CD4-positive, alpha-beta memory T cell (primary cell): ENCODE measurements at regions of chr7 and their contacts with region 1.

Region 1: GRCh38 chr7:139340037-139340807 is 915 bp upstream of the FMC1 start:
- DNase-seq: peak; percentile 97 to 100 (median 98)
- H3K4me3 ChIP-seq: peak overlapping the region; percentile 95 to 96
- H3K4me3 Mint-ChIP-seq: peak overlapping the region; percentile 95 to 99 (median 98)
- H3K27ac ChIP-seq: peak overlapping the region; percentile 100
- H3K27ac Mint-ChIP-seq: peak overlapping the region; percentile 100
- H3K4me1 ChIP-seq: peaks cover 20% of the 10 kb centered on the region
- H3K4me1 Mint-ChIP-seq: peaks cover 17 to 45% (median 27%) of the 10 kb centered on the region in 4 donors
- H3K27me3 ChIP-seq: no peaks in the 10 kb centered on the region
- H3K27me3 Mint-ChIP-seq: peaks cover 3 to 6% of the 10 kb centered on the region in 2 donors

Region 2: DNA sequence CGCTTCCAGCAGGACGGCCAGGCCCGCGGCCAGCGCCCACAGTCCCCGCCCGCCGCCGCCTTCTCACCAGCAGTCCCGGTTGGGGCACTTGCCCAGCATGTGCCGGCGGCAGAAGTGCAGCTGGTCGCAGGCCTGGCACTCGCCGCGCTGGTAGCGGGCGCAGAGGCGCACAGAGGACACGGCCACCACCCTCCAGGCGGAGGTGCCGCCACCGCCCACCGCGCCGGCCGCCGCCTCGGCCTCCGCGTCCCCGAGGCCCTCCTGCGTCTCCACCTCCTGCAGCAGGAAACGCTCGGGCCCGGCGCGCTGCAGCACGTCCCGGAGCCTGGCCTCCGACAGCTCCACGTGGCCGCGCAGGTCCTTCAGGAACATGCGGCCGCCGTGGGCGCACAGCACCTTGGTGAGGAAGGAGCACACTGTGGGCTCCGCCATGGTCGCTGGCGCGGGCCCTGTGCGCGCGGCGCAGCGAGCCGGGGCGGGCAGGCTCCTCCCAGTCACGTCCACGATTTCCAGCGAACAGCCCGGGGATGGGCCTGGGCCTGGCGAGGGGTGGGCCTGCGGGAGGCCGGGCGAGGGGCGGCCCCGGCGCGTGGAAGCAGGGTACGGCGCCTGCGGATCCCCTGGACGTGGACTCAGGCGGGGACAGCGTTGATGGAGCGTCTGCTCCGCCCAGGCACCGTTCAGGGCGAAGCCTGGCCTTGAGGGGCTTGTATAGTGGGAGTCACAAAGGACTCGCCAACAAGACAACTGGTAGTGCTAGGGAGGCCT is 304.5 kb before region 1 on chr7 and contains the start of gene ZC3HAV1L:
- CTCF ChIA-PET with region 1: no interaction called
- POLR2A ChIA-PET with region 1: no interaction called
- intact Hi-C with region 1: loop called (anchors 5 kb)
- DNase-seq: peak in 4 of 5 donors; percentile 35 to 48 (median 39)
- H3K4me3 ChIP-seq: peak within 1 kb of the TSS; percentile 14 to 51
- H3K4me3 Mint-ChIP-seq: peak within 1 kb of the TSS; percentile 74 to 88 (median 84)
- H3K27ac ChIP-seq: no peak within 1 kb of the TSS
- H3K27ac Mint-ChIP-seq: peak within 1 kb of the TSS in 3 of 7 donors; percentile 32 to 79 (median 57)
- H3K4me1 ChIP-seq: peaks cover 22% of the 10 kb centered on the region
- H3K4me1 Mint-ChIP-seq: peaks cover 12 to 33% (median 16%) of the 10 kb centered on the region in 4 donors
- H3K27me3 ChIP-seq: no peaks in the 10 kb centered on the region
- H3K27me3 Mint-ChIP-seq: no peaks in the 10 kb centered on the region
- total RNA-seq, gene ZC3HAV1L: 3.8 to 4.6 TPM

Region 3: DNA sequence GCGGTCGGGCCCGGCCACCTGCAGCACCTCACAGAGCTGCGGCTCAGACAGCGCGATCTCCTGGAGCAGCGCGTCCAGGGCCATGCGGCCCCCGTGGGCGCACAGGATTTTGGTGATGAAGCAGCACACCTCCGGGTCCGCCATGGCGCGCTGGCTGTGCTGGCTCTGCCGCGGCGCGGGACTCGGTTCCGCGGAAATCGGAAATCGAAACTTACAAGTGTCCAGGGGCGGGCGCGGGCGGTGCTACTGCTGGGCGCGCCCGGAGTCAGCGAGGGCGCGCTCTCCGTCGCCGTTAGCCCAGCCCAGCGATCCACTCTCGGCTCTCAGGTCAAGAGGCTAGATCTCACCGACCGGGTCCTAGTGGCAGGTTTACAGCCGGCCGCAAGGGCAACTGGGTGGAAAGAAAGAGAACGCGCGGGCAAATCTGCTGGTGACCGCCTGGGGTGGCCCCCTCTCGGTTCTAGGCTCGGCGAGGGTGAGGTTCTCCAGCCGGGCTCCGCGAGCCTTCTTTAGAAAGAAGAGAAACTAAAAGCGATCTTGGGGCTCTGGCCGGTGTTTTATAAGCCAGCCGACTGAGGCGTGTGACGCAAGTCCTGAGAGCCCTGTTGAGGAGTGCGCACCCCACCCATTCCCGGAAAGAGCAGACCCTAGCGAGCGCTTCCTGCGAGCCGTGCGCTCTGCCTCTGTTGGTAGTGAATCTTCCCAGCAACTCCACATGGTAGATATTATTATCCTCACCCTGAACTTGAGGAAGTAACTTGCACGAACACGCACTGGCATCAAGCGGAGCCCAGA is 230.8 kb before region 1 on chr7 and contains the start of gene ZC3HAV1:
- CTCF ChIA-PET with region 1: no interaction called
- POLR2A ChIA-PET with region 1: no interaction called
- intact Hi-C with region 1: loop called (anchors 1 kb)
- DNase-seq: peak; percentile 89 to 94 (median 93)
- H3K4me3 ChIP-seq: peak within 1 kb of the TSS; percentile 90 to 96
- H3K4me3 Mint-ChIP-seq: peak within 1 kb of the TSS; percentile 95 to 99 (median 97)
- H3K27ac ChIP-seq: peak within 1 kb of the TSS; percentile 96
- H3K27ac Mint-ChIP-seq: peak within 1 kb of the TSS; percentile 88 to 100 (median 99)
- H3K4me1 ChIP-seq: peaks cover 29% of the 10 kb centered on the region
- H3K4me1 Mint-ChIP-seq: peaks cover 28 to 59% (median 38%) of the 10 kb centered on the region in 4 donors
- H3K27me3 ChIP-seq: no peaks in the 10 kb centered on the region
- H3K27me3 Mint-ChIP-seq: no peaks in the 10 kb centered on the region
- total RNA-seq, gene ZC3HAV1: 154 to 159 TPM

Region 4: DNA sequence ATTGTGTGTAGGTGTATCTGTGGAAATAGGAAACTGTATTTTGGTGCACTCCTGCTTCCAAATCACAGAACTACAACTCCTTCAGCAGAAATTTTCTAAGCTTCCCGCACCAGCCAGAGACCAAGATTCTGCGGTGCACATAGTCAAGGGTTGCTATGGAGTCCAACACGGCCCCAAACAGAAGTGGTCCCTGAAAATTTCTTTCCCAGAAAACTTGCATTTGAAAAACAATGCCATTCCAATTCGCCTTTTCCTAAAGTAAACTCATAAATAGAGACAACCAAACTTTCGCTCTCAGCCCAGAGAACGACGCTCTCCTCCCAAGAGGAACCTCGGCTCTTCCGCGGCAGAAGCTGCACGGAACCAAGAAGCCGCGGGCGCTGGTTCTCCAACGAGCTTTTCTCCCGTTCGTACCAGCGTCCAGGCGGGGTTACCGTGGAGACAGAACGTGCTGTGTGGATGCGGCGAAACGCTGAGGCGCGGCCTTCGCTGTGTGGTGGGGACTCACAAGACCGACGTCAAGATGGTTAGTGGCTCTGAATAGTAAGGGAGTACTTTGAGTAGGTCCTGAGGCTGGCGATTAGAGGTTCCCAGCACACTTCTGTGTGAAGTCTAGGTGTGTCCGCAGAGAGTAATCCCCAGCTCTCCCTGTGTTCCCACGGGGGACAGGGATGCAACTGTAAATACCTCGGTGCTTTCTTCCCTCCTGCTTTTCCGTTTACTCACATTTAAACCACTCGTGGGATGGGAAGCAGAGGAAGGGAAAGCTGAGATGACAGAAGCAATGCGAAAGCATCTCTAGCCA is 206.7 kb before region 1 on chr7:
- CTCF ChIA-PET with region 1: no interaction called
- POLR2A ChIA-PET with region 1: no interaction called
- intact Hi-C with region 1: loop called (anchors 1 kb)
- DNase-seq: peak; percentile 86 to 89 (median 88)
- H3K4me3 ChIP-seq: peak overlapping the region; percentile 25 to 55
- H3K4me3 Mint-ChIP-seq: peak overlapping the region; percentile 87 to 97 (median 92)
- H3K27ac ChIP-seq: peak overlapping the region; percentile 56
- H3K27ac Mint-ChIP-seq: peak overlapping the region; percentile 73 to 97 (median 93)
- H3K4me1 ChIP-seq: peaks cover 14% of the 10 kb centered on the region
- H3K4me1 Mint-ChIP-seq: peaks cover 5 to 22% (median 17%) of the 10 kb centered on the region in 4 donors
- H3K27me3 ChIP-seq: no peaks in the 10 kb centered on the region
- H3K27me3 Mint-ChIP-seq: no peaks in the 10 kb centered on the region

Region 5: GRCh38 chr7:139230774-139231512 is 109.3 kb before region 1 on chr7 and contains the start of gene UBN2:
- CTCF ChIA-PET with region 1: interaction called, 3 read pairs
- POLR2A ChIA-PET with region 1: interaction called, 5 read pairs
- intact Hi-C with region 1: loop called (anchors 1 kb)
- DNase-seq: peak; percentile 79 to 90 (median 80)
- H3K4me3 ChIP-seq: peak within 1 kb of the TSS; percentile 79 to 96
- H3K4me3 Mint-ChIP-seq: peak within 1 kb of the TSS; percentile 98 to 100 (median 100)
- H3K27ac ChIP-seq: peak within 1 kb of the TSS; percentile 74
- H3K27ac Mint-ChIP-seq: peak within 1 kb of the TSS; percentile 96 to 100 (median 98)
- H3K4me1 ChIP-seq: peaks cover 19% of the 10 kb centered on the region
- H3K4me1 Mint-ChIP-seq: peaks cover 10 to 36% (median 24%) of the 10 kb centered on the region in 4 donors
- H3K27me3 ChIP-seq: no peaks in the 10 kb centered on the region
- H3K27me3 Mint-ChIP-seq: no peaks in the 10 kb centered on the region
- total RNA-seq, gene UBN2: 23.6 to 26.7 TPM

Region 6: GRCh38 chr7:139393621-139394211 is 53.5 kb after region 1 on chr7:
- CTCF ChIA-PET with region 1: interaction called, 3 read pairs
- POLR2A ChIA-PET with region 1: interaction called, 3 read pairs
- intact Hi-C with region 1: loop called (anchors 10 kb)
- DNase-seq: no peak
- H3K4me3 ChIP-seq: no peak overlapping the region
- H3K4me3 Mint-ChIP-seq: peak overlapping the region in 5 of 8 donors; percentile 3 to 62 (median 52)
- H3K27ac ChIP-seq: no peak overlapping the region
- H3K27ac Mint-ChIP-seq: peak overlapping the region in 6 of 7 donors; percentile 3 to 88 (median 76)
- H3K4me1 ChIP-seq: peaks cover 31% of the 10 kb centered on the region
- H3K4me1 Mint-ChIP-seq: peaks cover 38 to 58% (median 47%) of the 10 kb centered on the region in 4 donors
- H3K27me3 ChIP-seq: no peaks in the 10 kb centered on the region
- H3K27me3 Mint-ChIP-seq: no peaks in the 10 kb centered on the region

Region 7: GRCh38 chr7:139416405-139416804 is 76.2 kb after region 1 on chr7:
- CTCF ChIA-PET with region 1: no interaction called
- POLR2A ChIA-PET with region 1: no interaction called
- intact Hi-C with region 1: no loop called
- DNase-seq: no peak
- H3K4me3 ChIP-seq: no peak overlapping the region
- H3K4me3 Mint-ChIP-seq: no peak overlapping the region
- H3K27ac ChIP-seq: no peak overlapping the region
- H3K27ac Mint-ChIP-seq: peak overlapping the region in 3 of 7 donors; percentile 6 to 40 (median 23)
- H3K4me1 ChIP-seq: no peaks in the 10 kb centered on the region
- H3K4me1 Mint-ChIP-seq: peaks cover 0 to 4% (median 1%) of the 10 kb centered on the region in 4 donors
- H3K27me3 ChIP-seq: no peaks in the 10 kb centered on the region
- H3K27me3 Mint-ChIP-seq: no peaks in the 10 kb centered on the region

Region 8: GRCh38 chr7:139613971-139614411 is 273.8 kb after region 1 on chr7:
- CTCF ChIA-PET with region 1: no interaction called
- POLR2A ChIA-PET with region 1: no interaction called
- intact Hi-C with region 1: no loop called
- DNase-seq: no peak
- H3K4me3 ChIP-seq: no peak overlapping the region
- H3K4me3 Mint-ChIP-seq: no peak overlapping the region
- H3K27ac ChIP-seq: no peak overlapping the region
- H3K27ac Mint-ChIP-seq: peak overlapping the region in 2 of 7 donors; percentile 40 to 66
- H3K4me1 ChIP-seq: no peaks in the 10 kb centered on the region
- H3K4me1 Mint-ChIP-seq: no peaks in the 10 kb centered on the region
- H3K27me3 ChIP-seq: no peaks in the 10 kb centered on the region
- H3K27me3 Mint-ChIP-seq: no peaks in the 10 kb centered on the region

Region 9: DNA sequence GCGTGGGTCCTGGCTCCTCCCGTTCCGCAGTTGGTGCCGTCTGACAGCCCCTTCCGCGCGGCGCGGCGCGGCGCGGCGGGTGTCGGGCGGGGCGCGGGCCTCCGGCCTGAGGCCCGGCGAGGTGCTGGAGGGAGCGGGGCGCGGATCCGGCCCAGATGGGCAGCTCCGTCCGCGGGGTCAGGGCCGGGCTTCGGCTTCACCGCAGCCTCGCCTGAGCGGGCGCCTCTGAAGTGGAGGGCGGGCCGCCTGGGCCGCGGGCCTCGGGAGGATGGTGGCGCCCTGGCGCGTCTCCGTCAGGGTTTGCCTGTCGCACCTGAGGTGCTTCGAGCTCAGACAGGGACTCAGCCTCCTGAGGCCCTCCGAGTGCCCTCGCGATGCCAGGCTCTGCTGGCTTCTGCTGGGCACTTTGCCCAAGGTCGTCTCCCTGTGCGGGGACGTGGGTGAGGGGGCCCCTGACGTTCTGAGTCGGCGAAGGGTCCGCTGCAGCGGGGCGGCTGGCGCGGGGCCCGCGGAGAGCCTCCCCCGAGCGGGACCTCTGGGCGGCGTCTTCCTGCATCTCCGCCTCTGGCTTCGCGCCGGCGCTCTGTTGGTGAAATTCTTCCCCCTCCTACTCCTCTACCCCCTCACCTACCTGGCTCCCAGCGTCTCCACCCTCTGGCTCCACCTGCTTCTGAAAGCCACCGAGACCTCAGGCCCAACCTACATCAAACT is 1333.0 kb after region 1 on chr7:
- CTCF ChIA-PET with region 1: no interaction called
- POLR2A ChIA-PET with region 1: no interaction called
- intact Hi-C with region 1: loop called (anchors 10 kb)
- DNase-seq: peak; percentile 68 to 78 (median 74)
- H3K4me3 ChIP-seq: peak overlapping the region; percentile 61 to 65
- H3K4me3 Mint-ChIP-seq: peak overlapping the region; percentile 81 to 95 (median 88)
- H3K27ac ChIP-seq: peak overlapping the region; percentile 74
- H3K27ac Mint-ChIP-seq: peak overlapping the region; percentile 82 to 94 (median 92)
- H3K4me1 ChIP-seq: peaks cover 28% of the 10 kb centered on the region
- H3K4me1 Mint-ChIP-seq: peaks cover 17 to 42% (median 22%) of the 10 kb centered on the region in 4 donors
- H3K27me3 ChIP-seq: no peaks in the 10 kb centered on the region
- H3K27me3 Mint-ChIP-seq: no peaks in the 10 kb centered on the region